ENCODE measurements at regions of chr3 and their contacts with region 1.

Region 1: GRCh38 chr3:38521391-38521987 is 25.3 kb downstream of the EXOG start:
- DNase-seq: no peak
- H3K4me3 ChIP-seq: no peak overlapping the region
- H3K27ac ChIP-seq: no peak overlapping the region
- H3K4me1 ChIP-seq: no peaks in the 10 kb centered on the region
- H3K27me3 ChIP-seq: no peaks in the 10 kb centered on the region
- CTCF ChIP-seq: peak; percentile 66 to 88 (median 83)
- EP300 ChIP-seq: no peak
- POLR2A ChIP-seq: no peak

Region 2: DNA sequence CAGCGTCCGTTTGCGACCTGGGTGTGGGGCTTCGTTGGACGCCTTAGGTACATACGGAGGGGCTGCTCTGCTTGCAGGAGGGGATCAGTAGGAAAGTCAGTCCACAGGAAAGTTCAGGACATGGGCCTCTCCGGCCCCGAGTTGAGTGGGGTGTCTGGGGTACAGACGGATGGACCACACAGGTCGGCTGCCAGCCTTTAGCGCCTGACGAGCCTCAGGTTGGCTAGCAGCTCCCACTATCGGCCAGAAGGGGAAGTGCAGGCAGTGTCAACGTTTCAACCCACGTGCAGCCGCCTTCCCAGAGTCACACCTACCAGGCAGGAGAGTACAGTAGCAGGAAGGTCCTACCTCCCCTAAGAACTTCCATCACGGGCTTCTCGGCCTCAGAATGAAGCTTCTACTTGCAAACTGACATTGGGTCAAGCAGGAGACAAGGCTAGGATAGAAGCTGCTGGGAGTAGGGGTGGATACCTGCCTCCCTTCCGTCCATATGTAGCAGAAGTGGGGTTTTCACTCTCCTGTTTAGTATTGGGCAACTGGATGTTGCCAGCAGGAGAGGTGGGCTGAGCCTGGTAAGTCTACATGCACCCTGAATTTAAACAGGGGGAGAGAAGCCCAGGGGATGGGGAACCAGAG is 129.8 kb after region 1 on chr3:
- intact Hi-C with region 1: loop called (anchors 1 kb)
- DNase-seq: peak; percentile 77
- H3K4me3 ChIP-seq: no peak overlapping the region
- H3K27ac ChIP-seq: no peak overlapping the region
- H3K4me1 ChIP-seq: peaks cover 0 to 19% (median 14%) of the 10 kb centered on the region in 4 donors
- H3K27me3 ChIP-seq: peaks cover 6 to 38% (median 26%) of the 10 kb centered on the region in 3 donors
- CTCF ChIP-seq: peak; percentile 84 to 98 (median 90)
- EP300 ChIP-seq: no peak
- POLR2A ChIP-seq: no peak

Region 3: DNA sequence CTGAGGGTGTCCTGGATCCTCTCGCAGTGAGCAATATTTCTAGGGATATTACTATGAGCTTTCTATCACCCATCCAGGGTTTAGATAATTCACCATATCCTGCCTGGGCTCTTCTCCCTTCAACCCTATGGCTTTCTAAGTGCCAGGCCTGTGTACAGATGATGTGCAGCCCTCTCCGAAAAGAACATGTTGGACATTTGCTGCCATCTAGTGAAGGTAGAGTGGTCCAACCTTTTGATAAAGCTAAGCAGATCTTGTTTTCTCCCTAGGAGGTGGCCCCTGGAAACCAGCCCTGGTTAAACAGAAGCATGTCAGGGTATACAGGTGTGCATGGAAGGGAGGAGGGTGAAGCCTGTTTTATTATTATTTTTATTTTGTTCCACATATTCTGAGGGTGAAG is 322.4 kb after region 1 on chr3:
- intact Hi-C with region 1: loop called (anchors 5 kb)
- DNase-seq: no peak
- H3K4me3 ChIP-seq: no peak overlapping the region
- H3K27ac ChIP-seq: no peak overlapping the region
- H3K4me1 ChIP-seq: no peaks in the 10 kb centered on the region
- H3K27me3 ChIP-seq: no peaks in the 10 kb centered on the region
- CTCF ChIP-seq: no peak
- EP300 ChIP-seq: no peak
- POLR2A ChIP-seq: no peak

Measured in sigmoid colon (tissue), 7 donors.